Thyroid gland (tissue), 4 donors: ENCODE measurements at regions of chr22 and their contacts with region 1.

Region 1: GRCh38 chr22:28600546-28601143 is 79.0 kb downstream of the TTC28 start:
- DNase-seq: no peak
- H3K4me3 ChIP-seq: no peak overlapping the region
- H3K27ac ChIP-seq: no peak overlapping the region
- H3K4me1 ChIP-seq: no peaks in the 10 kb centered on the region
- H3K27me3 ChIP-seq: no peaks in the 10 kb centered on the region
- CTCF ChIP-seq: peak in 5 of 6 experiments; percentile 13 to 71 (median 52)
- POLR2A ChIP-seq: no peak

Region 2: DNA sequence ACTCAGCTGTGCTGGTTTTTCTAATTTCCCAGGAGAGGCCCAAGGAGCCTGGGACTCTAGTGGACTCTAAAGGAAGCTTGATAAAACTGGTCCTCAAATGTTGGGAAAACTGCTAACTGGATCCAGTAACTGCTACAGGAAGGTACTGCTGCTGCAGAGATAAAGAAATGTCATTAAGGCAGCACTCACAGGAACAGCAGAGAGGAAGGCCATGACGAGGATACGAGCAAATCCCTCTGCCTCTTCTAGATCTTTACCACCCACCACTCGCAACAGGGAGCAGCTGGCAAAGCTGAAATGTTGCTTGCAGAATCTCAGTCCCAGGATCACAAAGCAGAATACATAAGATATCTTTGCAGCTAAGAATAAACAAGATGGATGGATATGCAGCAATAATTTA is 55.5 kb after region 1 on chr22:
- intact Hi-C with region 1: no loop called
- DNase-seq: no peak
- H3K4me3 ChIP-seq: no peak overlapping the region
- H3K27ac ChIP-seq: no peak overlapping the region
- H3K4me1 ChIP-seq: no peaks in the 10 kb centered on the region
- H3K27me3 ChIP-seq: no peaks in the 10 kb centered on the region
- CTCF ChIP-seq: no peak
- POLR2A ChIP-seq: no peak

Region 3: GRCh38 chr22:28829358-28830181 is 228.9 kb after region 1 on chr22:
- intact Hi-C with region 1: loop called (anchors 5 kb)
- DNase-seq: peak; percentile 83 to 84
- H3K4me3 ChIP-seq: no peak overlapping the region
- H3K27ac ChIP-seq: peak overlapping the region; percentile 6 to 31 (median 27)
- H3K4me1 ChIP-seq: no peaks in the 10 kb centered on the region
- H3K27me3 ChIP-seq: no peaks in the 10 kb centered on the region
- CTCF ChIP-seq: peak; percentile 83 to 99 (median 97)
- POLR2A ChIP-seq: no peak